Heart right ventricle (tissue), 16 donors: ENCODE measurements at regions of chr14 and their contacts with region 1.

Region 1: DNA sequence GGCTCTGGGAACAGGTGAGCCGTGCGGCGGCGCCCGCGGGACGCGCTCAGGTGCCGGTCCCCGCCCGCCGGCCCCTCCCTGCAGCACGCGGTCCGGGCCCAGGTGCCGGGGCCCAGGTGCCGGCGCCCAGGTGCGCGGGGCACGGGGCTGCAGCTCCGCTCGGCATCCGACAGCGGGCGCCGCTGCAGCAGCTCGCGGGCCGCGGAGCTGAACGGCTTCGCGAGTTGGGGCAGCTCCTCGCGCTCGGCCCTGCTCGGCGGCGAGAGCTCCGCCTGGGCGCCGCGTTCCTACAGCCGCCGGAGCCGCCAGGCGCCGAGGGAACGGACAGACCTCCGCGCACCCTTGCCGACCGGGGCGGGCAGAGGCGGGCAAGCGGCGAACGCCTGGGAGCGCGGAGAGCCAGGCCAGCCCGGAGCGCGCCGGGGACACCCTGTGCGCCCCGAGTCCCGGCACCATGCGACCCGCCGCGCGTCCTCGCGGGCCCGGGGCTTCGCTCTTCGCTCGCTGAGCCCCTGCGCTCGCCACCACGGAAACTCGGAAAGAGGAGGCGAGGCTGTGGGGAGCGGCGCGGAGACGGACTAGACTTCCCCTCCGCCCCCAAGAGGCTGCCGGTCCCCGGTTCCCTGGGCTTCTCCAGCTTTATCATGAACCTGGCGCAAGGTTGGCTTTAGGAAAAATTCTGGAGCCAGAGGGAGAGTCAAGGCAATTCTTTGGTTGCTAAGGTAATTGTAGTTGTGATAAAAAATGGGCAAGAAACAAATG is at the start of gene RGS6:
- DNase-seq: peak in 1 of 2 donors; percentile 54
- ATAC-seq: peak; percentile 67 to 90 (median 87)
- H3K4me3 ChIP-seq: peak within 1 kb of the TSS; percentile 41 to 77 (median 66)
- H3K27ac ChIP-seq: peak within 1 kb of the TSS; percentile 9 to 77 (median 72)
- H3K4me1 ChIP-seq: peaks cover 0 to 20% (median 7%) of the 10 kb centered on the region in 9 donors
- H3K27me3 ChIP-seq: peaks cover 0 to 65% (median 9%) of the 10 kb centered on the region in 7 donors
- CTCF ChIP-seq: peak in 7 of 9 donors; percentile 2 to 54 (median 36)
- total RNA-seq, gene RGS6: 13.8 to 31.9 (median 21.0) TPM

Region 2: GRCh38 chr14:72000907-72001306 is 68.5 kb after region 1 on chr14:
- intact Hi-C with region 1: loop called in 2 of 10 experiments (anchors 5 kb)
- DNase-seq: peak; percentile 36 to 64
- ATAC-seq: peak; percentile 77 to 96 (median 88)
- H3K4me3 ChIP-seq: no peak overlapping the region
- H3K27ac ChIP-seq: peak overlapping the region in 9 of 10 donors; percentile 20 to 80 (median 67)
- H3K4me1 ChIP-seq: peaks cover 0 to 26% (median 10%) of the 10 kb centered on the region in 9 donors
- H3K27me3 ChIP-seq: no peaks in the 10 kb centered on the region
- CTCF ChIP-seq: no peak

Region 3: DNA sequence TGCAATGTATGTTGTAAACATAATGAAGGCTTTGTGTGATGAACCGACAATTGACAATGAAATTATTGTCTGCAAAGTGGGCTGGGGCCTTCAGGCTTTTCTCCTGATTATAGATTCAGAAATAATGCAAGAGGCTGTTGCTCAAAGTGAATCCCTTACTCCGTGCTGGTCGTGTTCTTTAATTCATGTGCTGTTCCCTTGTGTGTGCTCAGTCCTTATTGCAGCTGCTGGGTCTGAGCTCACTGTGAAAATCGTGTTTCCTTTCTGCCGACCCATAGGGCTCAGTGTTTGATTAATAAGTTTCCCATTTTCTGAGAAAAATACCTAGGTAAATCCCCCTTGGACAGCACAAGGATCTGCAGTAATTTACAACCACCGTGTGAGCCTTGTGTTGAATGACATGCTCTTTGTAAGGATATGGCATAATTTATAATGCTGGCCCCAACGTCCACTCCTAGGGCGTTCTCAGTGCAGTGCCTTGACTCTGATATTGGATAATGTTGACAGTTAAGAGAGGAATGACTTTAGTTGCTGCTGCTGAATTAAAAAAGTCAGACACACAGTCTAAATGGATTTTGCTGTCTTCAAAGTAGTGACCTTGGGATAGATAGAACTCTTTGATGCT is 81.4 kb after region 1 on chr14:
- intact Hi-C with region 1: loop called in 1 of 10 experiments (anchors 10 kb)
- DNase-seq: no peak
- ATAC-seq: peak in 1 of 8 donors; percentile 29
- H3K4me3 ChIP-seq: no peak overlapping the region
- H3K27ac ChIP-seq: no peak overlapping the region
- H3K4me1 ChIP-seq: peaks cover 0 to 7% (median 0%) of the 10 kb centered on the region in 9 donors
- H3K27me3 ChIP-seq: no peaks in the 10 kb centered on the region
- CTCF ChIP-seq: no peak

Region 4: GRCh38 chr14:72023722-72024407 is 91.5 kb after region 1 on chr14:
- intact Hi-C with region 1: loop called in 2 of 10 experiments (anchors 10 kb)
- DNase-seq: peak in 1 of 2 donors; percentile 14
- ATAC-seq: peak in 7 of 8 donors; percentile 25 to 72 (median 57)
- H3K4me3 ChIP-seq: no peak overlapping the region
- H3K27ac ChIP-seq: peak overlapping the region in 3 of 10 donors; percentile 7 to 37 (median 9)
- H3K4me1 ChIP-seq: peaks cover 0 to 33% (median 16%) of the 10 kb centered on the region in 9 donors
- H3K27me3 ChIP-seq: no peaks in the 10 kb centered on the region
- CTCF ChIP-seq: peak; percentile 34 to 72 (median 60)

Region 5: DNA sequence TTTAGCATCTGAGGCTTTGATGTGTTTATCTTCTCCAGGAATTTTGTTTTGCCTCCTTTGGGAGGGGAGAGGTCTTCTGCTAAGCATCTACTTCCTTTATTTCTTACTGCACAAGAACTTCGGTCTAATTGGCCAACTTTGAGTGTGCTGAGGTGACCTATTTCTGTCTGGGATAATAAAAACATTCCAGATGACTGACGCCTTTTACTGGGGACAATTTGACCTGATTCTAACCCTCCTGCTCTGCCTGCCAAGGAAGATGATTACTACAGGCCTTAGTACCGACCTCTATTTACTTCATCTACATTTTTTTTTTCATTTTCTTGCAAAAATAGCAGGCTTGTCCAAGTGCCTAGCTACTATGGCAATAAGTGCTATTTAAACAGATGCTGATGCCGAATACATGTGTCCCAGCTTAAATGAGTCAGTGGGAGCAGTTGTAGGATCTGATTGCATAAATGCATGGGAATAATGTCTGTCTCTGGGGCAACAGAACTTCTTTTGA is 254.1 kb after region 1 on chr14:
- intact Hi-C with region 1: loop called in 1 of 10 experiments (anchors 10 kb)
- DNase-seq: peak in 1 of 2 donors; percentile 27
- ATAC-seq: peak; percentile 84 to 98 (median 94)
- H3K4me3 ChIP-seq: no peak overlapping the region
- H3K27ac ChIP-seq: peak overlapping the region in 6 of 10 donors; percentile 15 to 62 (median 44)
- H3K4me1 ChIP-seq: peaks cover 2 to 31% (median 20%) of the 10 kb centered on the region in 9 donors
- H3K27me3 ChIP-seq: no peaks in the 10 kb centered on the region
- CTCF ChIP-seq: no peak

Region 6: GRCh38 chr14:72217146-72217545 is 284.7 kb after region 1 on chr14:
- intact Hi-C with region 1: no loop called
- DNase-seq: no peak
- ATAC-seq: no peak
- H3K4me3 ChIP-seq: no peak overlapping the region
- H3K27ac ChIP-seq: no peak overlapping the region
- H3K4me1 ChIP-seq: peaks cover 0 to 9% (median 0%) of the 10 kb centered on the region in 9 donors
- H3K27me3 ChIP-seq: no peaks in the 10 kb centered on the region
- CTCF ChIP-seq: no peak

Region 7: DNA sequence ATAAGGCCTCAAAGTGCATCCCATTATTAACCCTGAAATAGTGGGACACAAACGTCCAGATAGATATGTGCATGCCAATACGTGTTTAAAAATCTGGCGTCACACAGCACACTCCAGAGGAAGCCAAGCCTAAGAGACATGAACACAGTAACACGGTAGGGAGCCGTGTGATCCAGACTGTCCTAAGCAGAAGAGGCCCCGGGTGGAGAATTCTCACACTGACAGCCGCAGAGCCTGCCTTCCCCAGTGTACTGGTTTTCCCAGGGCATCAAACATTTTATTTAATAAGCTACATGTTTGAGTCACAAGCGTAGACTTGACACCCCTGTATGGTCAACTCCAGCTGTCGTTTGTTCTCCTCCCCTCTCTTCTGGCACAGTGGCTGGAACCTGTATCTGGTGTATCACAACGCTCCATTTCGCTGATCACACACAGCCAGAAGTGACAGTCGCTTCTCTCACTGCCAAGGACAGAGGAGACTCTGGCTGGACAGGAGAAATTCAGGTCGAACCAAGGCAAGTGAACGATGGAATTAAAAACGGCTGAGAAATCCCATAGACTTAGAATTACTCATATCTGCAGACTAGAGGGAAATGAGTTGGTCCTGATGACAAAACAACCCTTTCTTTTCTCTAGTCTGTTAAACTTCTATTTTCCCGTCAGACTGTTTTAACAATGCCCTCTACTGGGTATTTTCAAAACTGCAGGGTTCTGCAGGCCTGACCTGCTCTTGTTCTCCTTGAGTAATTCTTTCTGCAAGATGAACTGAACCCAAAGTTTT is 359.7 kb after region 1 on chr14:
- intact Hi-C with region 1: loop called (anchors 1 to 10 kb)
- DNase-seq: peak in 1 of 2 donors; percentile 29
- ATAC-seq: peak; percentile 81 to 88 (median 84)
- H3K4me3 ChIP-seq: peak overlapping the region in 8 of 10 donors; percentile 11 to 42 (median 26)
- H3K27ac ChIP-seq: peak overlapping the region in 2 of 10 donors; percentile 35 to 42
- H3K4me1 ChIP-seq: peaks cover 0 to 5% (median 0%) of the 10 kb centered on the region in 9 donors
- H3K27me3 ChIP-seq: no peaks in the 10 kb centered on the region
- CTCF ChIP-seq: peak; percentile 60 to 88 (median 81)

Region 8: DNA sequence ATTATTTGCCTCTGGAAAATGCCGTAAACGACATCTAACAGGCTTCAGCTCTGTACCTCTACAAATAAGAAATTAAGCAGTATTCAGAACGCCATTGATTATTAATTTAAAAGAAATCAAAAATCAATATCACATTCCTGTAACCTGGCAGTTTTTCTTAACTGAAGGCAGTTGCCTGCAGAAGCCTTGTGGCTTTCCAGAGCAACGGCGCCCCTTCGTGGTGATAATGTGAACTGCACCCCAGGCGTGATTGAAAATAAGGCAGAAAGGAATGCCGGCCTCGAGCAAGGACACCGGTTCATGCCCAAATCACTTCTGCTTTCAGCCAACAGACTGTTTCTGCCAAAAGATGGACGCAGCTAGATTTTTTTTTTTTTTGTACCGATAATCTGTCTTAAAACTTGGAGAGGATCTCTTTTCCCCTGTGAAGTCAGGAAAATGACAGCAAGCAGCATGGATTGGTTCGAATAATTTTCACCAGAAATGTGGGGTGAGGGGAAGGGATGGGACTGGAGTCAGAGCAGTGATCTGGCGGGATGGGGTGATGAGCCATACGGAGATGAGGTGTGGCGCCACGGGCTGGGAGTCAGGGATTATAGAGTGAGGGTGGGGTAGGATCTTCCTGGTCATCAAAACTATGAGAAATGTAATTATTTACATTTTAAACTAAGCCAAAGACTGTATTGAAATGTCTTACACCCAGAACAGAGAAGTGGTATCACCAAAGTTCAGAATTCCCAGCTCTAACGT is 488.5 kb after region 1 on chr14:
- intact Hi-C with region 1: loop called in 7 of 10 experiments (anchors 2 to 10 kb)
- DNase-seq: peak; percentile 67 to 72
- ATAC-seq: peak in 3 of 8 donors; percentile 57 to 69 (median 57)
- H3K4me3 ChIP-seq: no peak overlapping the region
- H3K27ac ChIP-seq: no peak overlapping the region
- H3K4me1 ChIP-seq: peaks cover 0 to 3% (median 0%) of the 10 kb centered on the region in 9 donors
- H3K27me3 ChIP-seq: no peaks in the 10 kb centered on the region
- CTCF ChIP-seq: peak; percentile 76 to 96 (median 92)